Calu3 (cell line): ENCODE measurements at regions of chr21 and their contacts with region 1.

Region 1: GRCh38 chr21:35400233-35400957 is 351.3 kb upstream of the RUNX1 start:
- DNase-seq: peak; percentile 44
- H3K4me3 Mint-ChIP-seq: no peak overlapping the region
- H3K27ac Mint-ChIP-seq: peak overlapping the region; percentile 70
- H3K4me1 Mint-ChIP-seq: peaks cover 33% of the 10 kb centered on the region
- H3K27me3 Mint-ChIP-seq: no peaks in the 10 kb centered on the region
- CTCF ChIP-seq: no peak

Region 2: DNA sequence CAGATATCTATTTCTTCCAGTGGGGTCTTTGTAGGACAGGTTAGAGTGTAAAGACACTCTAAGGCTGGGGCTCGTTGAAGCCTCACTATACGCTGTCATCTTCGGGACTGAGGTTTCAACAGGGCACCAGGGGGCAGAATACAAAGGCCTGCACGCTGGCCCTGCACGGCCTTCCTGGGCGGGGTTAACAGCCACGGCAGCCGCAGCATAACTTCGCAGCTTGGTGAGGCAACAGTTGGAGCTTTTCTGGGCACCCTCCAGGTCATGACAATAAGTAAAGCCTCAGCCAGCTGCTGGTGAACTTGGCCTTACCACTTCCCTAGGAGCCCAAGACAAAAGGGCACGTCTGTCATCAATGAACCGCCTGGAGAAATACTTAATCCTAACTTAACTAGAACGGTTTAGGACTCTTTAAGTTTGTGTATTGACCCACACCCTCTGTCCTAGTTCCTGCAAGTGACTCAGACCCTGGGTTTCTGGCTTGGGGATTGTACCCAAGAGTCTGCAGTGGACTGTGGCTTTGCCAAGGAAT is 349.0 kb before region 1 on chr21:
- CTCF ChIA-PET with region 1: interaction called, 9 read pairs
- intact Hi-C with region 1: loop called (anchors 1 kb)
- DNase-seq: peak; percentile 88
- H3K4me3 Mint-ChIP-seq: no peak overlapping the region
- H3K27ac Mint-ChIP-seq: peak overlapping the region; percentile 86
- H3K4me1 Mint-ChIP-seq: peaks cover 43% of the 10 kb centered on the region
- H3K27me3 Mint-ChIP-seq: no peaks in the 10 kb centered on the region
- CTCF ChIP-seq: peak; percentile 64

Region 3: GRCh38 chr21:35217504-35218060 is 182.8 kb before region 1 on chr21:
- CTCF ChIA-PET with region 1: no interaction called
- intact Hi-C with region 1: loop called (anchors 1 kb)
- DNase-seq: peak; percentile 79
- H3K4me3 Mint-ChIP-seq: no peak overlapping the region
- H3K27ac Mint-ChIP-seq: peak overlapping the region; percentile 95
- H3K4me1 Mint-ChIP-seq: peaks cover 46% of the 10 kb centered on the region
- H3K27me3 Mint-ChIP-seq: no peaks in the 10 kb centered on the region
- CTCF ChIP-seq: no peak

Region 4: GRCh38 chr21:35508139-35508888 is 107.9 kb after region 1 on chr21:
- CTCF ChIA-PET with region 1: interaction called, 9 read pairs
- intact Hi-C with region 1: loop called (anchors 5 kb)
- DNase-seq: peak; percentile 68
- H3K4me3 Mint-ChIP-seq: no peak overlapping the region
- H3K27ac Mint-ChIP-seq: no peak overlapping the region
- H3K4me1 Mint-ChIP-seq: peaks cover 47% of the 10 kb centered on the region
- H3K27me3 Mint-ChIP-seq: no peaks in the 10 kb centered on the region
- CTCF ChIP-seq: peak; percentile 25